PC-3 (cell line): ENCODE measurements at regions of chr6 and their contacts with region 1.

Region 1: DNA sequence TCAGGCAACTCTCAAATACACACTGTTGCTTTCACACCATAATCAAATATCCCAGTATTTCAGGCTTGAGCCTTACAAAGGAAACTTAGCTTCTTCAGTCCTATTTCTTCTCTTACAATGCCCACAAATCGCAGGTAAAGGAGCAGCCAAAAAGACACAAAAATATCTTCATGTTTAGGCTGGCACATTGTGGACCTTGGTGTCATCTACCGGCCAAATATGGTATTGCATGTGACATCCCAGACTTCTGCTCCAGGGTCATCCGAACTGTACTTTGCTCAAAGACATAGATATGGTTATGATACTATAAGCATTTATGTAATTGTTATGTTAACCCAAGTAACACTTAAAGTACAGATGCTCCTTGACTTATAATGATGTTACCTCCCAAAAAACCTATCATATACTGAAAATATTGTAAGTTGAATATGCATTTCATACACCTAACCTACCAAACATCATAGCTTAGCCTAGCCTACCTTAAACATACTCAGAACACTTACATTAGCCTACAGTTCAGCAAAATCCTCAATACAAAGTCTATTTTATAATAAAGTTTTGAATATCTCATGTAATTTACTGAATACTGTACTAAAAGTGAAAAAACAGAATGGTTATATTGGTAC is 4.6 kb downstream of the OR2H2 start:
- DNase-seq: peak; percentile 71
- ATAC-seq: peak; percentile 68
- H3K4me3 ChIP-seq: no peak overlapping the region
- H3K27ac ChIP-seq: no peak overlapping the region
- H3K4me1 ChIP-seq: no peaks in the 10 kb centered on the region
- H3K27me3 ChIP-seq: peaks cover 23% of the 10 kb centered on the region
- CTCF ChIP-seq: peak; percentile 97

Region 2: GRCh38 chr6:29376003-29376402 is 213.5 kb before region 1 on chr6:
- CTCF ChIA-PET with region 1: interaction called, 4 read pairs
- POLR2A ChIA-PET with region 1: no interaction called
- intact Hi-C with region 1: loop called (anchors 1 kb)
- DNase-seq: peak; percentile 54
- ATAC-seq: no peak
- H3K4me3 ChIP-seq: no peak overlapping the region
- H3K27ac ChIP-seq: no peak overlapping the region
- H3K4me1 ChIP-seq: no peaks in the 10 kb centered on the region
- H3K27me3 ChIP-seq: peaks cover 24% of the 10 kb centered on the region
- CTCF ChIP-seq: peak; percentile 34; the same call in 1 of the 2 replicates

Region 3: GRCh38 chr6:29414588-29414987 is 174.9 kb before region 1 on chr6 and contains the start of gene OR12D1:
- CTCF ChIA-PET with region 1: no interaction called
- POLR2A ChIA-PET with region 1: no interaction called
- intact Hi-C with region 1: loop called (anchors 1 kb)
- DNase-seq: peak; percentile 36
- ATAC-seq: peak; percentile 48; the same call in 1 of the 2 replicates
- H3K4me3 ChIP-seq: no peak within 1 kb of the TSS
- H3K27ac ChIP-seq: no peak within 1 kb of the TSS
- H3K4me1 ChIP-seq: no peaks in the 10 kb centered on the region
- H3K27me3 ChIP-seq: peaks cover 18% of the 10 kb centered on the region; the same call in 1 of the 2 replicates
- CTCF ChIP-seq: peak; percentile 57
- total RNA-seq, gene OR12D1: not detected in 2 replicates

Region 4: DNA sequence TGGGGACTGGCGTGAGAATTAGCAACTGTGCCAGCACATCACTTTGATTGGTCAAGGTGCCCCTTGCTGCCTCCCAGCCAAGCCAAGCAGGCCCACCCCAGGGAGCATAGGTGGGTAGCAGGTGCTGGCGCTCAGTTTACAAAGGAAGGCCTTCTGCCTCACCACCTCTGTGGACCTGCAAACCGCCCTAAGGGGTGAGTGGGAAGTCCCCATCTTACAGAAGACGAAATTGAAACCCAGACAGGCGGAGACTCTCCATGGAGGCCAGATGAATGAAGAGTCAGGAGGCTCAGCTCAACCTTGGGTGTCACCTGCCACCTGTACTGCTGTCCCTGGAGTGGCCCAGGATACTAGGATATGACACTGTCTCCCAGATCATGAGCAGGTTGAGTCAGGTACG is 80.3 kb before region 1 on chr6:
- CTCF ChIA-PET with region 1: no interaction called
- POLR2A ChIA-PET with region 1: no interaction called
- intact Hi-C with region 1: no loop called
- DNase-seq: no peak
- ATAC-seq: no peak
- H3K4me3 ChIP-seq: no peak overlapping the region
- H3K27ac ChIP-seq: no peak overlapping the region
- H3K4me1 ChIP-seq: no peaks in the 10 kb centered on the region
- H3K27me3 ChIP-seq: peaks cover 55% of the 10 kb centered on the region
- CTCF ChIP-seq: no peak